Gastrocnemius medialis (tissue), 4 donors: ENCODE measurements at regions of chr3 and their contacts with region 1.

Region 1: GRCh38 chr3:105868742-105869530 is at the start of gene CBLB:
- DNase-seq: peak; percentile 88 to 90
- ATAC-seq: peak; percentile 91 to 92
- H3K4me3 ChIP-seq: peak within 1 kb of the TSS; percentile 89 to 98 (median 96)
- H3K27ac ChIP-seq: peak within 1 kb of the TSS; percentile 93 to 98 (median 96)
- H3K4me1 ChIP-seq: peaks cover 40 to 41% of the 10 kb centered on the region in 2 donors
- H3K27me3 ChIP-seq: no peaks in the 10 kb centered on the region
- CTCF ChIP-seq: no peak
- POLR2A ChIP-seq: peak; percentile 77 to 89
- total RNA-seq, gene CBLB: 14.8 to 46.4 (median 21.6) TPM

Region 2: GRCh38 chr3:105686278-105686897 is 182.5 kb before region 1 on chr3:
- in situ Hi-C with region 1: no loop called
- intact Hi-C with region 1: loop called (anchors 5 kb)
- DNase-seq: no peak
- ATAC-seq: no peak
- H3K4me3 ChIP-seq: no peak overlapping the region
- H3K27ac ChIP-seq: no peak overlapping the region
- H3K4me1 ChIP-seq: peaks cover 0 to 2% of the 10 kb centered on the region in 2 donors
- H3K27me3 ChIP-seq: no peaks in the 10 kb centered on the region
- CTCF ChIP-seq: peak in 4 of 5 experiments; percentile 33 to 73 (median 70)
- POLR2A ChIP-seq: no peak

Region 3: GRCh38 chr3:105791919-105792786 is 76.8 kb before region 1 on chr3:
- in situ Hi-C with region 1: no loop called
- intact Hi-C with region 1: loop called (anchors 2 kb)
- DNase-seq: peak; percentile 70 to 83
- ATAC-seq: peak; percentile 96 to 98
- H3K4me3 ChIP-seq: peak overlapping the region in 2 of 4 donors; percentile 2 to 9
- H3K27ac ChIP-seq: peak overlapping the region; percentile 70 to 76 (median 72)
- H3K4me1 ChIP-seq: peaks cover 13 to 35% of the 10 kb centered on the region in 2 donors
- H3K27me3 ChIP-seq: no peaks in the 10 kb centered on the region
- CTCF ChIP-seq: no peak
- POLR2A ChIP-seq: no peak

Region 4: DNA sequence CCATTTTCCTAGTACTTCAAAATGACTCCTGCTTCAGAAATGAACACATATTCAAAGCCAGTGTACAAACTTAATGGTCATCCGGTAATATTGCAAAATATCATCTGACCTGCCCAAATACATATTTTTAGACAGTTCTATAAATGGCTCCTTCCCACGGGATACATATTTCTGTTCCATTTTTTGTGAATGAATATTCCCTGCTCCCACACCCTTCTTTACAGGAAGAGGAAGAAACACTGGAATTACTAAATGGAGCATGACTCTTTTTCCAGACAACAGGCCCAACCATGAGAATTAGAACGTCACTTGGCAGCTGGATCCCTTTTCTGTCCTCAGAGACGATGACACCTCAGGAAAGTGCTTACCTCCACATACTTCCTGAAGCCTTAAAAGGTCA is 37.9 kb after region 1 on chr3:
- in situ Hi-C with region 1: no loop called
- intact Hi-C with region 1: loop called (anchors 1 kb)
- DNase-seq: peak; percentile 45 to 67
- ATAC-seq: peak; percentile 93
- H3K4me3 ChIP-seq: no peak overlapping the region
- H3K27ac ChIP-seq: peak overlapping the region; percentile 52 to 65 (median 57)
- H3K4me1 ChIP-seq: peaks cover 24 to 29% of the 10 kb centered on the region in 2 donors
- H3K27me3 ChIP-seq: no peaks in the 10 kb centered on the region
- CTCF ChIP-seq: no peak
- POLR2A ChIP-seq: no peak

Region 5: DNA sequence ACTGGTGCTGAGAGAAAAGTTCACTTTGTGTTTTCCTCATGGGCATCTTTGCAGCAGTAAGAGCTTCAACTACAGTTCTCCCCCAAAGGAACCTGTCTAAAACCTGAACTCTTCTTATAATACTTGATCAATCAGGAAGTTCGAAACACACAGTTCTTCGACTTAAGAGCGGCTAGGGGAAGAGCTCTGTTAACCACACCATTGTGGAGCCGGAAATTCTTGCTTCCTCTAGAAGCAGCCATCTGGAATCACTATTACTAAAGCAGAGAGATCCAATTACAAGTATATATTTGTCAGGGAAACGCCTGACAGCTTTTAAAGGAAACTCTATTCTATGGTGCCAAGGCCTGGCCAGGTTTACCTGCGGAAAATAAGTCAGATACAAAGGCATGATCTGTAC is 337.2 kb after region 1 on chr3:
- in situ Hi-C with region 1: no loop called
- intact Hi-C with region 1: loop called (anchors 10 kb)
- DNase-seq: no peak
- ATAC-seq: peak; percentile 78 to 84
- H3K4me3 ChIP-seq: peak overlapping the region in 3 of 4 donors; percentile 5 to 38 (median 6)
- H3K27ac ChIP-seq: peak overlapping the region; percentile 22 to 60 (median 41)
- H3K4me1 ChIP-seq: peaks cover 18 to 37% of the 10 kb centered on the region in 2 donors
- H3K27me3 ChIP-seq: no peaks in the 10 kb centered on the region
- CTCF ChIP-seq: no peak
- POLR2A ChIP-seq: no peak